Activated CD4-positive, alpha-beta memory T cell treated with anti-CD3 and anti-CD28 coated beads for 36 hours (primary cell): ENCODE measurements at regions of chr17 and their contacts with region 1.

Region 1: DNA sequence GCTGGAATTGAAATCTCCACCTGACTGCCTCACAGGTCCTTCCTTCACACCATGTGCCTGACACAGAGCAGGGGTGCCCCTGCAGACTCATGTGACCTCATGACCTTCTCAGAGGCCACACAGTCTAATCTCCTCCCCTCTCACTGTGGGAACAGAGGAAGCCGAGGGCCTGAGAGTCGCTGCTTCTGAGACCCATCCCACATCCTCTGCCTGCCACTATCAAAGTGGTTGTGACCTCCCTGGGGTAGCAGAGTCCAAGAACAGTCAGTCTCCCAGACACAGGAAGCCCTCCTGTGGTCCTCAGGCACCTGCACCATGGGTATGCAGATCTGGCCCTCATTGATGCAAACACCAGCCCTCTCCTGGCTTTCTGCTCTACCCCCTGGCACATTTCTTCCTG is 78.5 kb downstream of the RAB11FIP4 start:
- DNase-seq: no peak
- H3K4me3 Mint-ChIP-seq: no peak overlapping the region
- H3K27ac Mint-ChIP-seq: no peak overlapping the region
- H3K4me1 Mint-ChIP-seq: peaks cover 5% of the 10 kb centered on the region
- H3K27me3 Mint-ChIP-seq: peaks cover 1% of the 10 kb centered on the region

Region 2: GRCh38 chr17:31481783-31482081 is 11.8 kb after region 1 on chr17:
- CTCF ChIA-PET with region 1: no interaction called
- POLR2A ChIA-PET with region 1: no interaction called
- intact Hi-C with region 1: loop called (anchors 1 kb)
- DNase-seq: no peak
- H3K4me3 Mint-ChIP-seq: no peak overlapping the region
- H3K27ac Mint-ChIP-seq: peak overlapping the region; percentile 9
- H3K4me1 Mint-ChIP-seq: peaks cover 7% of the 10 kb centered on the region
- H3K27me3 Mint-ChIP-seq: no peaks in the 10 kb centered on the region

Region 3: GRCh38 chr17:31517524-31517923 is 47.6 kb after region 1 on chr17:
- CTCF ChIA-PET with region 1: no interaction called
- POLR2A ChIA-PET with region 1: no interaction called
- intact Hi-C with region 1: no loop called
- DNase-seq: no peak
- H3K4me3 Mint-ChIP-seq: no peak overlapping the region
- H3K27ac Mint-ChIP-seq: no peak overlapping the region
- H3K4me1 Mint-ChIP-seq: peaks cover 11% of the 10 kb centered on the region
- H3K27me3 Mint-ChIP-seq: no peaks in the 10 kb centered on the region